Calu3 (cell line): ENCODE measurements at regions of chr3 and their contacts with region 1.

Region 1: GRCh38 chr3:183385698-183386613 is 42.5 kb downstream of the MCF2L2 start:
- DNase-seq: peak; percentile 77
- H3K4me3 Mint-ChIP-seq: no peak overlapping the region
- H3K27ac Mint-ChIP-seq: no peak overlapping the region
- H3K4me1 Mint-ChIP-seq: peaks cover 31% of the 10 kb centered on the region
- H3K27me3 Mint-ChIP-seq: peaks cover 24% of the 10 kb centered on the region
- CTCF ChIP-seq: peak; percentile 86

Region 2: DNA sequence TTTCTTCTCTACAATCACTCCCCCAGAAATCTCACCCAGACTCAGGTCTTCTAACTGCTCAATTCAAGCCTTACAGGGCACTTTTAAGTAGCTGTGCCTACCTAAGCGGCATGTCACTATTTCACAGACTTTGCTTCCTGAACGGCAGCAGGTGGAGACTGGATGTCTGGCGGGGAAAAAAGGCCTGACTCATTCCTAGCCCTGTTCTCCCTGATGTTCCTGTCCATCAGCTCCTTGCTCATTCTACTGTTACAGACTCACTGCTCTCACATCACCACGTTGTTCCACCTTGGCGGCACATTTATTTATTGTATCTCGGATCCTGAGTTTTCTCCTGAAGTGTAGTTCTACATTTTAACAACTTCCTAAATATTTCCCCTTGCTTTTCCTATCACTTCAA is 645.2 kb before region 1 on chr3:
- CTCF ChIA-PET with region 1: no interaction called
- intact Hi-C with region 1: no loop called
- DNase-seq: peak; percentile 83
- H3K4me3 Mint-ChIP-seq: peak overlapping the region; percentile 27
- H3K27ac Mint-ChIP-seq: peak overlapping the region; percentile 87
- H3K4me1 Mint-ChIP-seq: peaks cover 37% of the 10 kb centered on the region
- H3K27me3 Mint-ChIP-seq: no peaks in the 10 kb centered on the region
- CTCF ChIP-seq: no peak

Region 3: GRCh38 chr3:182909318-182910040 is 476.5 kb before region 1 on chr3:
- CTCF ChIA-PET with region 1: no interaction called
- intact Hi-C with region 1: loop called (anchors 5 kb)
- DNase-seq: no peak
- H3K4me3 Mint-ChIP-seq: no peak overlapping the region
- H3K27ac Mint-ChIP-seq: no peak overlapping the region
- H3K4me1 Mint-ChIP-seq: no peaks in the 10 kb centered on the region
- H3K27me3 Mint-ChIP-seq: no peaks in the 10 kb centered on the region
- CTCF ChIP-seq: peak; percentile 31

Region 4: DNA sequence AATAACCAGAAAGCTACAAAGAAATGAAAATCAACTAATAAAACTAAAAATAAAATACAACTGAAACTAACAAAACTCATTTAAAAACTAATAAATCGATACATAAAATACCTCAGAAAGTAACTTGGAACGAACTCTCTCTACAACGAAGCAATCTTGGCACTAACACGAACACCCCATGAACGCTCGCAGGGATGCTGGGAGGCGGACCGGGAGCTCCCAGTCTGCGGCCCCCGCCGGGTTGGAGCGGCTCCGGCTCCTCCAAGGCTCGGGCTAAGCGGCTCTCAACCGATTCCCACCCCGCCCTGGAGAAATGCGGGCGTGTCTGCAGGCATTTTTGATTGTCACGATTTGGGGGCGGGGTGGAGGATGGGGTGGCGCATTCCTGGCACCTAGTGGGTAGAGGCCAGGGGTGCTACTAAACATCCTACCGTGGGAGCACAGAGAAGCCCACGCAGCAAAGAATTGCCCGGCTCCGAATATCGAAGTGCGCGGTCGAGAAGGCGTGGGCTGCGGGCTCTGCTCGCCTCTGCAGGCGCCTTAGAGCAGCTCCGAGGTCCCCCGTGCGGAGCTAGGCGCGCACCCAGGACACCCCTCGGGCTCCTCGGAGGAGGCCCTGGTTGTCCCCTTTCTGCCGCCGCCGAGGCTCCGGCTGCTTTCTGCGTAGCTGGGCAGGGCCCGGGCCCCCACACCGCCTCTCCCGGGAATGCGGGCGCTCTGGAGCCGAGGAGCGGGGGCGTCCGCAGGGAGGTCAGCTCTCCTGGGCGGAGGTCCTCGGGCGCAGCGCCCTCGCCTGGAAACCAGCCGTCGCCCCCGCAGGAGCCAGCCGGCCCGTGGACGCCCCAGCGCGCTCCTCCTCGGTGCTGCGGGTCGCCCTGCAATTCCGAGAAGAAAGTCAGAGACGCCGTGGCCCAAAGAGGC is 207.1 kb before region 1 on chr3:
- CTCF ChIA-PET with region 1: interaction called, 224 read pairs
- intact Hi-C with region 1: loop called (anchors 1 kb)
- DNase-seq: peak; percentile 75
- H3K4me3 Mint-ChIP-seq: peak overlapping the region; percentile 69
- H3K27ac Mint-ChIP-seq: no peak overlapping the region
- H3K4me1 Mint-ChIP-seq: peaks cover 15% of the 10 kb centered on the region
- H3K27me3 Mint-ChIP-seq: peaks cover 57% of the 10 kb centered on the region
- CTCF ChIP-seq: no peak

Region 5: GRCh38 chr3:183252973-183253901 is 132.7 kb before region 1 on chr3 and contains the start of gene B3GNT5:
- CTCF ChIA-PET with region 1: interaction called, 18 read pairs
- intact Hi-C with region 1: loop called (anchors 2 kb)
- DNase-seq: peak; percentile 91
- H3K4me3 Mint-ChIP-seq: peak within 1 kb of the TSS; percentile 84
- H3K27ac Mint-ChIP-seq: peak within 1 kb of the TSS; percentile 55
- H3K4me1 Mint-ChIP-seq: peaks cover 30% of the 10 kb centered on the region
- H3K27me3 Mint-ChIP-seq: no peaks in the 10 kb centered on the region
- CTCF ChIP-seq: no peak
- total RNA-seq, gene B3GNT5: 42.9 and 43.6 TPM in 2 replicates

Region 6: DNA sequence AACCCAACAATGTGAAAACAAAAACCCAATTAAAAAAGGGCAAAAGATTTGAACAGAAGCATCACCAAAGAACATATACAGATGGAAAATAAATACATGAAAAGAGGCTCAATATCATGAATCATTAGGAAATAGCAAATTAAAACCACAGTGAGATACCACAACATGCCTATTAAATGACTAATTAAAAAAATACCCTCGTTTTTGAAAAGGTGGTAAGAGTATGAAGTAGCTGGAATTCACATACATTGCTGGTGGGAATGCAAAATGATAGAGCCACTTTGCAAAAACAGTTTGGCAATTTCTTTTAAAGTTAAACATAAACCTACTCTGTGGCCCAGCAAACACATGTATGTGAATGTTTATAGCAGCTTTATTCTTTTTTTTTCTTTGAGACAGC is 57.1 kb before region 1 on chr3:
- CTCF ChIA-PET with region 1: interaction called, 12 read pairs
- intact Hi-C with region 1: loop called (anchors 5 kb)
- DNase-seq: no peak
- H3K4me3 Mint-ChIP-seq: no peak overlapping the region
- H3K27ac Mint-ChIP-seq: peak overlapping the region; percentile 2
- H3K4me1 Mint-ChIP-seq: peaks cover 45% of the 10 kb centered on the region
- H3K27me3 Mint-ChIP-seq: peaks cover 8% of the 10 kb centered on the region
- CTCF ChIP-seq: no peak